CD4-positive, alpha-beta T cell (primary cell): ENCODE measurements at regions of chr1 and their contacts with region 1.

Region 1: DNA sequence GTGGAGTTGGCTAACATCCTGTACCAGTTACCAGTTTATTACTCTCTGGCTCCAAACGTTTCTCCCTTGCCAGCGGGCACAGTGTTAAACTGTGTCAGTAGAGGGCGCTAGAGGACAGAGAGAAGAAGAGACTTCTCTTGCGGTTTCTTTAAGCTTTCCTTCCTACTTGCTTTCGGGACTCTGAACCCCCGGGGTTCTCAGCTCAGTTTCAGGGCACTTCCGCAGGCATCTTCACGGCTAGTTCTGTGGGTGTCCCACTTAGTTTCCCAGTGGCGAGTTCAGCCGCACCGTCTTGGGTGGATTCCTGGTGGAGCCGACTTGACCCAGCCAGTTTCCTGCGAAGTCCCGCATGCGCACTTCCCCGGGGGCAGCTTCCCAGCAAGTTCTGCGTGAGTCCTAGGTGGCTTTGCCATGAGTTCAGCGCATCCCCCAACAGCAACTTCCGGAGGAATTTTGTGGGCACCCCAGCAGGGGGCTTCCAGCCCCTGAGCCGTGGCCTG is 37.9 kb upstream of the BTG2 start:
- DNase-seq: peak; percentile 67 to 93 (median 78)
- ATAC-seq: peak; percentile 46
- H3K4me3 ChIP-seq: peak overlapping the region; percentile 66
- H3K4me3 Mint-ChIP-seq: peak overlapping the region; percentile 73
- H3K27ac ChIP-seq: peak overlapping the region; percentile 58 to 69
- H3K27ac Mint-ChIP-seq: peak overlapping the region; percentile 77
- H3K4me1 ChIP-seq: peaks cover 38% of the 10 kb centered on the region
- H3K4me1 Mint-ChIP-seq: peaks cover 22% of the 10 kb centered on the region
- H3K27me3 ChIP-seq: no peaks in the 10 kb centered on the region
- H3K27me3 Mint-ChIP-seq: no peaks in the 10 kb centered on the region
- CTCF ChIP-seq: peak; percentile 94

Region 2: GRCh38 chr1:203133970-203134725 is 133.2 kb before region 1 on chr1:
- CTCF ChIA-PET with region 1: no interaction called
- POLR2A ChIA-PET with region 1: no interaction called
- intact Hi-C with region 1: no loop called
- DNase-seq: no peak
- ATAC-seq: no peak
- H3K4me3 ChIP-seq: no peak overlapping the region
- H3K4me3 Mint-ChIP-seq: no peak overlapping the region
- H3K27ac ChIP-seq: no peak overlapping the region
- H3K27ac Mint-ChIP-seq: no peak overlapping the region
- H3K4me1 ChIP-seq: peaks cover 6% of the 10 kb centered on the region
- H3K4me1 Mint-ChIP-seq: no peaks in the 10 kb centered on the region
- H3K27me3 ChIP-seq: peaks cover 3 to 4% of the 10 kb centered on the region in 2 experiments
- H3K27me3 Mint-ChIP-seq: peaks cover 35% of the 10 kb centered on the region
- CTCF ChIP-seq: no peak

Region 3: DNA sequence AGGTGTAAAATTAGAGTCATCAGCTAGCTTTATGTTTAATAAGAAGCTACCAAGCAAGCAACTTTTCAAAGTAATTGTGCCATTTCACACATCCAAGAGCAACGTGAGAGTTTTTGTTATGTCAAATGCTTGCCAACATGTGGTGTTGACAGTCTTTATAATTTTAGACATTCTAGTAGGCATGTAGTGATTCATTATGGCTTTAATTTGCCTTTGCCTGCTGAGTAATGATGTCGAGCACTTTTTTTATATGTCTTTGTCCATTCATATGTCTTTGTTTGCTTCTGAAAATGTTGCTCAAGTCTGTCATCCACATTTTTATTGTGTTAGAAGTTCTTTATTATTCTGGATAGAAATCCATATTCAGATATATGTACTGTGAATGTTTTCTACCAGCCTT is 16.5 kb before region 1 on chr1:
- CTCF ChIA-PET with region 1: interaction called, 10 read pairs
- POLR2A ChIA-PET with region 1: no interaction called
- intact Hi-C with region 1: no loop called
- DNase-seq: no peak
- ATAC-seq: no peak
- H3K4me3 ChIP-seq: no peak overlapping the region
- H3K4me3 Mint-ChIP-seq: no peak overlapping the region
- H3K27ac ChIP-seq: no peak overlapping the region
- H3K27ac Mint-ChIP-seq: no peak overlapping the region
- H3K4me1 ChIP-seq: no peaks in the 10 kb centered on the region
- H3K4me1 Mint-ChIP-seq: no peaks in the 10 kb centered on the region
- H3K27me3 ChIP-seq: peaks cover 13 to 15% of the 10 kb centered on the region in 2 experiments
- H3K27me3 Mint-ChIP-seq: peaks cover 36% of the 10 kb centered on the region
- CTCF ChIP-seq: no peak

Region 4: DNA sequence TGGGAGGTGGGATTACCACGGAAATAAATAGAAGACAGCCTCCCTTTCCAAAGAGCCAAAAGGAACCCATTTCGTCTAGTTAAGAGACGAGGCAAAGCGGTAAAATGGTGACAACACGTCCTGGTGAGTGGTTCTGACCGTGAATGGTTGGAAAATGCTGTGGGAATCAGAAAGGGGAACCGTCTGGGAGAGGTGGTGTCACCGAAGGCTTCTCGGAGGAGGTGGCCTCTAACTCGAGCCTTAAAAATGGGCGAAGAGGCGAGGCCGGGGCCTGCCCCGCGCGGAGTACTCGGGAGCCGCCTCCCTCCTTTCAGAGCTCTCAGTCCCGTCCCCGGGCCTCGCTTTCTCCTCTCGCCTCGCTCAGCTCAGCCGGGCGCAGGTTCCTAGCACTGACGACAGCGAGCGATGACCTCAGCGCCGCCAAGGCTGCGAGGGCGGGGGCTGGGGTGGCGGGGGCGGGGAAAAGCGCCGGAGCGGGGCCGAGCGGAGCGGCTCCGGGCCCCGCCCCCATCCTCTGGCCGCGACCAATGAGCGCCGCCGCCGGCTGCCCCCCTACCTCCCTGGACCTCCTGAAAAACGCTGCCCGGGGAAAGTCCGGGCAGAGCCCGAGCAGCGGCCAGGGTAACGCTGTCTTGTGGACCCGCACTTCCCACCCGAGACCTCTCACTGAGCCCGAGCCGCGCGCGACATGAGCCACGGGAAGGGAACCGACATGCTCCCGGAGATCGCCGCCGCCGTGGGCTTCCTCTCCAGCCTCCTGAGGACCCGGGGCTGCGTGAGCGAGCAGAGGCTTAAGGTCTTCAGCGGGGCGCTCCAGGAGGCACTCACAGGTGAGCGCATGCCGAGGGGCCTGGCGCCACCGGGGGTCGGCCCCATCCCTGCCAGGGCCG is 37.8 kb after region 1 on chr1 and contains the start of gene BTG2:
- CTCF ChIA-PET with region 1: interaction called, 81 read pairs
- POLR2A ChIA-PET with region 1: interaction called, 320 read pairs
- intact Hi-C with region 1: no loop called
- DNase-seq: peak; percentile 84 to 97 (median 90)
- ATAC-seq: peak; percentile 78
- H3K4me3 ChIP-seq: peak within 1 kb of the TSS; percentile 73
- H3K4me3 Mint-ChIP-seq: peak within 1 kb of the TSS; percentile 95
- H3K27ac ChIP-seq: peak within 1 kb of the TSS; percentile 97 to 98
- H3K27ac Mint-ChIP-seq: peak within 1 kb of the TSS; percentile 98
- H3K4me1 ChIP-seq: peaks cover 54% of the 10 kb centered on the region
- H3K4me1 Mint-ChIP-seq: peaks cover 71% of the 10 kb centered on the region
- H3K27me3 ChIP-seq: no peaks in the 10 kb centered on the region
- H3K27me3 Mint-ChIP-seq: no peaks in the 10 kb centered on the region
- CTCF ChIP-seq: no peak
- total RNA-seq, gene BTG2: 802 to 849 TPM

Region 5: GRCh38 chr1:203702130-203702577 is 434.8 kb after region 1 on chr1:
- CTCF ChIA-PET with region 1: interaction called, 6 read pairs
- POLR2A ChIA-PET with region 1: no interaction called
- intact Hi-C with region 1: loop called (anchors 1 to 5 kb)
- DNase-seq: peak; percentile 42 to 83 (median 62)
- ATAC-seq: peak; percentile 74
- H3K4me3 ChIP-seq: no peak overlapping the region
- H3K4me3 Mint-ChIP-seq: no peak overlapping the region
- H3K27ac ChIP-seq: no peak overlapping the region
- H3K27ac Mint-ChIP-seq: peak overlapping the region; percentile 24
- H3K4me1 ChIP-seq: no peaks in the 10 kb centered on the region
- H3K4me1 Mint-ChIP-seq: peaks cover 15% of the 10 kb centered on the region
- H3K27me3 ChIP-seq: no peaks in the 10 kb centered on the region
- H3K27me3 Mint-ChIP-seq: no peaks in the 10 kb centered on the region
- CTCF ChIP-seq: peak; percentile 91